Heart left ventricle (tissue), 16 donors: ENCODE measurements at regions of chr3 and their contacts with region 1.

Region 1: DNA sequence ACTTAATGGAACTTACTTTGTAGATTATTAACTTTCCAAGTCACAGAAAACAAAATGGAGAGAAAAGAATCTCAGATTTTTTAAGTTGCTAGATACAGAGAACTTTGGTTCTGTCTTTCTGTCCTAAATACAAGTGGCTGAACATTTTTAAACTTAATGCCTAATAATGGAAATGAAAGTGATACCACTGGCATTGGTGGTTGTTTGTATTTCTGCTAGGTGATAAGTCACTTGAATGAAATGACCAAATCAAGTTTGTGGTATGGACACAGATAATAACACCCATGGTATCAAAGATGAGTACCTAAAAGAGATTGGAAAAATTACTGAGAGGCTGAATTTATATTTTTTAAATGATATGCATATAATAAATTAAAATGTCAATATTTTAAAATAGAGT is 502.1 kb downstream of the CNTN6 start:
- DNase-seq: no peak
- ATAC-seq: no peak
- H3K4me3 ChIP-seq: no peak overlapping the region
- H3K27ac ChIP-seq: no peak overlapping the region
- H3K4me1 ChIP-seq: no peaks in the 10 kb centered on the region
- H3K27me3 ChIP-seq: no peaks in the 10 kb centered on the region
- CTCF ChIP-seq: no peak
- POLR2A ChIP-seq: no peak

Region 2: DNA sequence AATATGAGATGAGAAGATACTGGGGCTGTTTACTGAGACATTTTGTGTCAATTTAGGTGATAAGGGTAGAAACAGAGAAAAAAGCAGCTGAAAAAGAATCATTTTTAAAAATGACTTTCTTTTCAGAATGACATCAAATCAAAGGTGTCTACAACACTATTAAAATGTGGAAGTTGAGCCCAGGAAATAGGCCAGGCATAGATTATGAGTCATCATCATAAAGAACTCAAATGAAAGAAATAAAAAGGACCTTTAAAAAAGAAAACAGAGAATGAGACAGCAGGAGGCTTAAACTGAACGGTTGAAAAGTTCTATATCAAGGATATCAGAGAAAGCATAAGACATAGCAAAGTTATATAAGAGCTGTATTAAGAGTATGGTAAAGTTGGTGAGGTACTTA is 59.6 kb before region 1 on chr3:
- intact Hi-C with region 1: no loop called
- DNase-seq: no peak
- ATAC-seq: no peak
- H3K4me3 ChIP-seq: no peak overlapping the region
- H3K27ac ChIP-seq: no peak overlapping the region
- H3K4me1 ChIP-seq: no peaks in the 10 kb centered on the region
- H3K27me3 ChIP-seq: no peaks in the 10 kb centered on the region
- CTCF ChIP-seq: no peak
- POLR2A ChIP-seq: no peak

Region 3: DNA sequence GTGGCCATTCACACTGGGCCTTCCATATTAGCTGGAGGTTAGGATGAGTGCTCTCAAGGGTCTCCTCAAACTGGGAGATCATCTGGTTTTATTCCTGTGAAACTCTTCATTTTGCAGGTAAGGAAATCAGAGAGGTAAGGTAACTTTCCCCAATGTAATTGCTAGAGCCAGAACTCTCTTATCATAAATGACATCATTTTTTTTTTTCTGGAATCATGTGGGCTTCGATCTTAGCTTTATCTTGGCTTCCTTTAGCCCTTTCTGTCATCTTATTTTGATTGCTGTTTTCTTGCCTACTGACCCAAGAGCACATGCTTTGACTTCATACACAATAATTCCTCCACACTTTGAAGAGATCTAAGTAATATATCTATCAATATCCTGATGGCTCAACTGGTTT is 39.0 kb before region 1 on chr3:
- intact Hi-C with region 1: loop called in 1 of 10 experiments (anchors 2 kb)
- DNase-seq: no peak
- ATAC-seq: no peak
- H3K4me3 ChIP-seq: no peak overlapping the region
- H3K27ac ChIP-seq: no peak overlapping the region
- H3K4me1 ChIP-seq: no peaks in the 10 kb centered on the region
- H3K27me3 ChIP-seq: no peaks in the 10 kb centered on the region
- CTCF ChIP-seq: no peak
- POLR2A ChIP-seq: no peak

Region 4: GRCh38 chr3:1734494-1735122 is 139.7 kb after region 1 on chr3:
- intact Hi-C with region 1: no loop called
- DNase-seq: no peak
- ATAC-seq: no peak
- H3K4me3 ChIP-seq: no peak overlapping the region
- H3K27ac ChIP-seq: peak overlapping the region in 1 of 12 donors; percentile 40
- H3K4me1 ChIP-seq: peaks cover 0 to 4% (median 0%) of the 10 kb centered on the region in 12 donors
- H3K27me3 ChIP-seq: no peaks in the 10 kb centered on the region
- CTCF ChIP-seq: no peak
- POLR2A ChIP-seq: no peak